Endothelial cell of umbilical vein (primary cell): ENCODE measurements at regions of chr2 and their contacts with region 1.

Region 1: DNA sequence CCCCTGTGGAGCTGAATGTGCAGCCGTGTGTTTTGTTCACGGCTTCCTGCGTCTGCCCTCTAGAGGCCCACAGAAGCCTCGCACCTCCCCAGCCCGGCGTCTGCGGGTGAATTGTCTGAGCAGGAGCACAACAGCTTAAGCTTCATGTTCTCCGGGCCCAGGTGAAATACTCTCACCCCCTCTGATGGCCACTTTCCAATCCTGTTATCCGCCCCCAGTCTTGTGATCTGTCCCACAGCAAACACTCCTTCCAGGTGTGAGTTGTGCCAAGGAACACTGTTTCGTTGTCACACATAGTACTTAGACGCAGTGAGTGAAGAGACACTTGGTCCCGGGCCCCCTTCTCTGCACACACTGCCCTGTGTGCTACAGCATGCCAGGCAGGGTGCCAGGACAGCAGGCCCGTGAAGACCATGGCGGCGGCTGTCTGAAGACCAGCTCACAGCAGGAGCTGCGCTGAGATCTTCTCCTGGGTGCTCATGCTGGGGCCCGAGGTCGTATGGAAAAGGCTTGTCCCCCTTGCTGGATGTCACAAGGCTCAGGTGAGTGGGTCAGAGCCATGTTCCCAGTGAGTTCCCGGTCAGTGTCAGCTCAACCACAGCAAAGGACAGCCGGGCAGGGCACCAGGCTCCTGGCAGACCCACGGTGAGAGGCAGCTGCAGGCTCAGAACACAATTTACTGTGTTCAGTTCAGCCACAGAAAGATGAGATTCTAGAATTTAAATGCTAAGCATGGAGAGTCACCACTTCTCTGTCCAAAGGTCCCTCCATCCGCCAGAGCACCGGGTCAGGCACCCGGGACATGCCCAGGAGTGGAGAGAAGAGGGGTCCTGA is 6.8 kb upstream of the PXDN start:
- DNase-seq: peak; percentile 68
- H3K4me3 ChIP-seq: no peak overlapping the region
- H3K27ac ChIP-seq: no peak overlapping the region
- H3K4me1 ChIP-seq: peaks cover 3% of the 10 kb centered on the region
- H3K27me3 ChIP-seq: peaks cover 0 to 4% of the 10 kb centered on the region in 2 experiments
- CTCF ChIP-seq: peak; percentile 80 to 96
- POLR2A ChIP-seq: no peak

Region 2: GRCh38 chr2:1591978-1592907 is 158.9 kb before region 1 on chr2:
- CTCF ChIA-PET with region 1: interaction called, 137 read pairs
- POLR2A ChIA-PET with region 1: no interaction called
- dilution Hi-C with region 1: no loop called
- intact Hi-C with region 1: loop called (anchors 1 kb)
- DNase-seq: peak; percentile 79
- H3K4me3 ChIP-seq: no peak overlapping the region
- H3K27ac ChIP-seq: no peak overlapping the region
- H3K4me1 ChIP-seq: peaks cover 12% of the 10 kb centered on the region
- H3K27me3 ChIP-seq: no peaks in the 10 kb centered on the region
- CTCF ChIP-seq: peak; percentile 68 to 83
- POLR2A ChIP-seq: no peak

Region 3: GRCh38 chr2:1625208-1625937 is 125.8 kb before region 1 on chr2:
- CTCF ChIA-PET with region 1: interaction called, 16 read pairs
- POLR2A ChIA-PET with region 1: no interaction called
- dilution Hi-C with region 1: no loop called
- intact Hi-C with region 1: no loop called
- DNase-seq: peak; percentile 92
- H3K4me3 ChIP-seq: no peak overlapping the region
- H3K27ac ChIP-seq: peak overlapping the region; percentile 79
- H3K4me1 ChIP-seq: peaks cover 23% of the 10 kb centered on the region
- H3K27me3 ChIP-seq: no peaks in the 10 kb centered on the region
- CTCF ChIP-seq: no peak
- POLR2A ChIP-seq: peak; percentile 41

Region 4: GRCh38 chr2:1675633-1676032 is 75.5 kb before region 1 on chr2:
- CTCF ChIA-PET with region 1: interaction called, 17 read pairs
- POLR2A ChIA-PET with region 1: no interaction called
- dilution Hi-C with region 1: no loop called
- intact Hi-C with region 1: no loop called
- DNase-seq: peak; percentile 22
- H3K4me3 ChIP-seq: no peak overlapping the region
- H3K27ac ChIP-seq: no peak overlapping the region
- H3K4me1 ChIP-seq: no peaks in the 10 kb centered on the region
- H3K27me3 ChIP-seq: no peaks in the 10 kb centered on the region
- CTCF ChIP-seq: no peak
- POLR2A ChIP-seq: no peak

Region 5: DNA sequence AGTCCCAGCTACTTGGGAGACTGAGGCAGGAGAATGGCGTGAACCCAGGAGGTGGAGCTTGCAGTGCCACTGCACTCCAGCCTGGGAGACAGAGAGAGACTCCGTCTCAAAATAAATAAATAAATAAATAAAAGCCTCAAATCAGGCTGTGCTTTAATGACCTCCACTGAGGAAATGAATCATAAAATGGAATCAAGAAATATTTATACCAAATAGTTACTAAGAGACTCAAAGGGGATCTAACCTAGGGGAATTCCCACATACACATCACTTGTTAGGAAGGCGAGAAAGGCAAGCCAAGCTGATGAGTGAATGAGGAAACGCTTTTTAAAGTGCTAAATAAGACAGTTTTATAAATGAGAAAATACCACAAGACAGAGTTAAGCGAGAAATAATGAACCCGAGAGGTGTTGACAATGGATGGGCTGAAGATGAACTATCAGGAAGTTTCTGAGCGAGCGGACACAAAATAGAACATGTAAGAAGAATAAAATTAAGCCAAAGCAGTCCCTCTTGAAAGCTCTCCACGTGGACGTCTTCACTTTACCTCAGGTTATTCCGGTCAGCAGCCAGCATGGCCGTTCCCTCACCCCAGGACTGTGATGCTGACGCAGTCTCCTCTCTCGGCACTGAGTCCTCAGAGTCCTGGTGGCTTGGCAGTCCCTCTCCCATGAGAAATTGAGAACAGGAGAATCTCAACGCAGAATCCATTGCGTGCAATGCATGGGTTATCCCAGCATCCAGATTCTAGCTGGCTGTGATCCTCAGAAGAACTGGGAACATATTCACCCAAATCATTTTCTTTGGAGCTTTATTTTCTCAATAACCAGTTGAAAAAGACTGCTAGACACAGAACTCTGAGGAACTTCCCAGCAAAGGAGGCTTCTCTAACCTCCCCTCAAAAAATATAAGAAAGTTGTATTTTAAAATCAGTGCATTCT is 29.2 kb before region 1 on chr2:
- CTCF ChIA-PET with region 1: interaction called, 11 read pairs
- POLR2A ChIA-PET with region 1: no interaction called
- dilution Hi-C with region 1: no loop called
- intact Hi-C with region 1: no loop called
- DNase-seq: peak; percentile 91
- H3K4me3 ChIP-seq: peak overlapping the region in 1 of 3 experiments; percentile 51
- H3K27ac ChIP-seq: peak overlapping the region; percentile 98
- H3K4me1 ChIP-seq: peaks cover 34% of the 10 kb centered on the region
- H3K27me3 ChIP-seq: no peaks in the 10 kb centered on the region
- CTCF ChIP-seq: no peak
- POLR2A ChIP-seq: no peak

Region 6: GRCh38 chr2:1769703-1770422 is 18.7 kb after region 1 on chr2:
- CTCF ChIA-PET with region 1: interaction called, 52 read pairs
- POLR2A ChIA-PET with region 1: no interaction called
- dilution Hi-C with region 1: no loop called
- intact Hi-C with region 1: no loop called
- DNase-seq: peak; percentile 51
- H3K4me3 ChIP-seq: no peak overlapping the region
- H3K27ac ChIP-seq: no peak overlapping the region
- H3K4me1 ChIP-seq: no peaks in the 10 kb centered on the region
- H3K27me3 ChIP-seq: no peaks in the 10 kb centered on the region
- CTCF ChIP-seq: peak; percentile 80
- POLR2A ChIP-seq: no peak